Activated CD4-positive, alpha-beta T cell treated with anti-CD3 and anti-CD28 coated beads for 36 hours (primary cell): ENCODE measurements at regions of chr12 and their contacts with region 1.

Region 1: DNA sequence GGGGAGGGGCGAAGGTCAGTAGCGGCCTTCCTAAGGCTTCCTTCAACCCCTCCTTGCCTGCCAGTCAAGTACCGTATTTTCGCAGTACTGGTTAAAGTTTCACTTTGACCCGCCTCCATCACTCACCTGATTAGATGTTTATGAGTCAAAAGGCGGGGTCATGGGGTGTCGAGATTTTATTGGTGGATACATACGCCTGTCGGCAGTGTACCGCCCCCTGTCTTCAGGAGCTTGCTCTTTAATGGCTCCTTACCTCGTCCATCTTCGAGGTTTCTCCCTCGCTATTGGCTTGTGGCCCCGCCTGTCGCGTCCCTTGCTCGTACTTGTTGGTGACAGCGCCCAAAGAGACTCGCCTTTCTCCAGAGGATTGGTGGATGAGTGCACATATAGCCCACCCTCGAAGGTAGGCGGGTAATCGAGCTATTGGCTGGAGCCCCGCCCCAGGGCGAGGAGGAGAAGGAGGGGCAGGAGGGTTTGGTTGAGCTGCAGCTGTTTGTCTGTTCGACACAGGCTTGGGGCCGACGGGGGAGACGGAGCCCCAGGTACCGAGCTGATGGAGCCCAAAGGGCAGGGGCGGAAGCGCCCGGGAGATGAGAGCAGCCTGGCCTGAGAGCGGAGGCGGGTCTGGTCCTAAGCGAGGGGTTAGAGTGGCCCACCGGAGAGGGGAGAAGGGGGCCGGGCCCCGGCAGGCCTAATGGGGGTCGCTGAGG is at the start of gene RAB5B:
- DNase-seq: peak; percentile 98
- ATAC-seq: peak; percentile 93
- H3K4me3 Mint-ChIP-seq: no peak within 1 kb of the TSS
- H3K27ac Mint-ChIP-seq: no peak within 1 kb of the TSS
- H3K4me1 Mint-ChIP-seq: peaks cover 28% of the 10 kb centered on the region
- H3K27me3 Mint-ChIP-seq: no peaks in the 10 kb centered on the region
- total RNA-seq, gene RAB5B: 33.2 to 35.1 TPM

Region 2: DNA sequence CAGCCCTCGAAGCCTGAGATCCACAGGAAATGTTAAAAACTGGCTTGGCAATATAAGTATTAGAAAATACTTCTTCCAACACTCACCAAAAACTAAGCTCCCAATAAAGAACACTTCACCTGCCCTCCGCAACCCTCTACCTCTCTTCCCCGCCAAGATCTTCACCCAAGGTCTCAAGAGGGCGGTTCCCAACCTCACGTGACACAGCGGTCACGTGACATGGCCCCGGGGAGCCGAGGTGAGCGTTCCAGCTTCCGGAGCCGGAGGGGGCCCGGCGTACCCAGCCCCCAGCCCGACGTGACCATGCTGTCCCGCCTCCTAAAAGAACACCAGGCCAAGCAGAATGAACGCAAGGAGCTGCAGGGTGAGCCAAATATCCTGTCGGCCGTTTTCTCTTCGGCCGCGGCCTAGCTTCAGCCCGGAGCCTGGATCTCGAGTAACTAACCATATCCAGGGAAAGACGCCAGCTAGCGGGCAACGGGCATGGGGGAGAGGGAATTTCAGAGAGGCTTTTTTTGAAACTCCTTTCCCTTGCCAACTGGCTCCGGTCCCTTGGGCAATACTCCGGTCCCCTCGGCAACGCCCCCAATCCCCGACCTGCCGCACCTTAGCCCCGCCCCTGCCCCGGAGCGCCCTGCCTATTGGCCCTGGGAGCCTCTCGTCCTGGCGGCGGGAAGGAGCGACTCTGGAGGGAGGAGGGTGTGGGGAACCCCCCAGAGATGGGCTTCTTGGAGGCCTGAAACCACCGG is 257.7 kb before region 1 on chr12 and contains the start of gene BLOC1S1:
- CTCF ChIA-PET with region 1: no interaction called
- POLR2A ChIA-PET with region 1: no interaction called
- intact Hi-C with region 1: loop called in 1 of 2 experiments (anchors 1 kb)
- DNase-seq: peak; percentile 97
- ATAC-seq: peak; percentile 94
- H3K4me3 Mint-ChIP-seq: peak within 1 kb of the TSS; percentile 86
- H3K27ac Mint-ChIP-seq: peak within 1 kb of the TSS; percentile 89
- H3K4me1 Mint-ChIP-seq: peaks cover 30% of the 10 kb centered on the region
- H3K27me3 Mint-ChIP-seq: peaks cover 2% of the 10 kb centered on the region
- total RNA-seq, gene BLOC1S1: 107 to 115 TPM

Region 3: GRCh38 chr12:55829967-55830600 is 143.7 kb before region 1 on chr12:
- CTCF ChIA-PET with region 1: no interaction called
- POLR2A ChIA-PET with region 1: interaction called, 15 read pairs
- intact Hi-C with region 1: loop called in 1 of 2 experiments (anchors 1 kb)
- DNase-seq: peak; percentile 52
- ATAC-seq: peak; percentile 37
- H3K4me3 Mint-ChIP-seq: peak overlapping the region; percentile 99
- H3K27ac Mint-ChIP-seq: peak overlapping the region; percentile 97
- H3K4me1 Mint-ChIP-seq: peaks cover 46% of the 10 kb centered on the region
- H3K27me3 Mint-ChIP-seq: no peaks in the 10 kb centered on the region

Region 4: GRCh38 chr12:55996715-55997534 is 23.2 kb after region 1 on chr12 and contains the start of gene SUOX:
- CTCF ChIA-PET with region 1: interaction called, 22 read pairs
- POLR2A ChIA-PET with region 1: interaction called, 3 read pairs
- intact Hi-C with region 1: no loop called
- DNase-seq: peak; percentile 65
- ATAC-seq: peak; percentile 87
- H3K4me3 Mint-ChIP-seq: peak within 1 kb of the TSS; percentile 56
- H3K27ac Mint-ChIP-seq: peak within 1 kb of the TSS; percentile 37
- H3K4me1 Mint-ChIP-seq: peaks cover 20% of the 10 kb centered on the region
- H3K27me3 Mint-ChIP-seq: peaks cover 3% of the 10 kb centered on the region
- total RNA-seq, gene SUOX: 2.9 to 3.4 TPM

Region 5: GRCh38 chr12:56636675-56637540 is 663.2 kb after region 1 on chr12:
- CTCF ChIA-PET with region 1: no interaction called
- POLR2A ChIA-PET with region 1: no interaction called
- intact Hi-C with region 1: loop called in 1 of 2 experiments (anchors 1 kb)
- DNase-seq: peak; percentile 98
- ATAC-seq: peak; percentile 73
- H3K4me3 Mint-ChIP-seq: peak overlapping the region; percentile 87
- H3K27ac Mint-ChIP-seq: peak overlapping the region; percentile 92
- H3K4me1 Mint-ChIP-seq: peaks cover 60% of the 10 kb centered on the region
- H3K27me3 Mint-ChIP-seq: no peaks in the 10 kb centered on the region